GM18951 (cell line): ENCODE measurements at regions of chr5 and their contacts with region 1.

Region 1: GRCh38 chr5:170408226-170408625 is 19.1 kb upstream of the KCNMB1 start:
- POLR2A ChIP-seq: no peak

Region 2: GRCh38 chr5:170183816-170184687 is 224.2 kb before region 1 on chr5:
- in situ Hi-C with region 1: no loop called
- POLR2A ChIP-seq: no peak

Region 3: GRCh38 chr5:170235876-170236864 is 172.1 kb before region 1 on chr5:
- in situ Hi-C with region 1: loop called (anchors 5 kb)
- POLR2A ChIP-seq: no peak

Region 4: DNA sequence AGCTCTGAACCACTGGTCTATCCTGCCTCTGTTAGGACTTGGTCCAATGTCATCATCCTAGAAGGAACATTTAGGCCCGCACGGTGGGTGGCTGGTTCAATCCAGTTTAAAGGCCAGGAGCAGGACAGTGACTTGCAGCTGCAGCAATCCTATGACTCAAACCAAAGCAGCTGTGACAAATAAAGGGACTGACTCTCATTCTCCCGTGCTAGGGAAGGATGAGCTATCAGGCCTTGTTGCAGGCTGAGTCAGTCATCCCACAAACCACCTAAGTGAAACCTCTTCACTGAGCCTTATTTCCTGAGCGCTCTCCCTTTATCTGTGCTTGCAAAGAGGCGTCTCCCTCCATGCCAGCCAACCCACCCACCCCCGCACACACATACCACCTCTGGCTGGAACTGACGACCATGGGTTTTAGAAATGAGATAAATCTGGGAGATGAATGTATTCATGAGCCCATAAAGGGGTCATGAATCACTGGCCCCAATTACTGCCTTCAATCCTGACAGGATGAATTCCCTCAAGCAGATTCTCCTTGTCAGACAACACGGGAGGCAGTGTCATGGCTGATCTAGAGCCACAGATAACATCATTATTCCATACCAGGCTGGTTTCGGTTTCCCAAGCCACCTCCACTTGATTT is 189.0 kb after region 1 on chr5:
- in situ Hi-C with region 1: no loop called
- POLR2A ChIP-seq: no peak